ENCODE measurements at regions of chr2 and their contacts with region 1.

Region 1: DNA sequence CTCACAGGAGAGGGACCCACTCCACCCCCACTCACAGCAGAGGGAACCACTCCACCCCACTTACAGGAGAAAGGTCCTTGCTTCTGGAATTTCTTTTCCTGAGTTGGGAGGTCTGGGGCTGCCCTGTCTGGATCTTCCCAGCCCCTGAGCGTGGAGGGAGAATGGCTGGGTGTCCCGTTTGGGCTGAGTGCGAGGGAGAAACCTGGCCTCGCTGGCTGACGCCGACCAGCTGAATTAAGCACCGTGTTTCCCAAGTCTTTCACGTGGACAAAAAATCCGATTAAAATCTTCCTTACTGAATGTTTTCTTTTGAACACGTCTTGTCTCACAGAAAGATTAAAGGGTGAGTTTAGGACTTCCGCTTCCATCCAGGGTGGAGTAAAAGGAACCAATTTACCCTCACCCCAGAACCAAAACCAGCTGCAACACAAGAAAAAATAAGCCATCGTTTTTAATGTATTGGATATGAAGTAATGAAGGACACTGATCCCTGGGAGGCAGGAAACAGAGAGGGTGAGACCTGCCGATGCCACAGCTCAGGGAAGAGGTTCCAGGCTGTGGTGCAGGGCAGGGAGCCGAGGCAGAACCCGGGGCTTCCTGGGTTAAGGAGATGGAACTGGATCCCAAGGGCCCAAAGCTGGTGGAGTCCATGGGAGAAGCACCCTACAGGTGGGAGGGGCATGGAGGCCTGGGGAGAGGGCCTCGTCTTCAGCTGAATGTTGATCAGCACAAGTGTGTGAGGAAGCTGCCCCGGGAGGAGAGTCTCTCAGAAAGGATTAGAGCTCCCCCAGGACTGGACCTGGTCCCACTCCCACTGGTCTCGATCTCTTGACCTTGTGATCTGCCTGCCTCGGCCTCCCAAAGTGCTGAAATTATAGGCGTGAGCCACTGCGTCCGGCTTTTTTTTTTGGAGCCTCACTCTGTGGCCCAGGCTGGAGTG is 60.3 kb downstream of the RTP5 start:
- DNase-seq: no peak
- ATAC-seq: no peak
- H3K4me3 ChIP-seq: no peak overlapping the region
- H3K27ac ChIP-seq: no peak overlapping the region
- H3K4me1 ChIP-seq: no peaks in the 10 kb centered on the region
- H3K27me3 ChIP-seq: no peaks in the 10 kb centered on the region
- CTCF ChIP-seq: no peak

Region 2: DNA sequence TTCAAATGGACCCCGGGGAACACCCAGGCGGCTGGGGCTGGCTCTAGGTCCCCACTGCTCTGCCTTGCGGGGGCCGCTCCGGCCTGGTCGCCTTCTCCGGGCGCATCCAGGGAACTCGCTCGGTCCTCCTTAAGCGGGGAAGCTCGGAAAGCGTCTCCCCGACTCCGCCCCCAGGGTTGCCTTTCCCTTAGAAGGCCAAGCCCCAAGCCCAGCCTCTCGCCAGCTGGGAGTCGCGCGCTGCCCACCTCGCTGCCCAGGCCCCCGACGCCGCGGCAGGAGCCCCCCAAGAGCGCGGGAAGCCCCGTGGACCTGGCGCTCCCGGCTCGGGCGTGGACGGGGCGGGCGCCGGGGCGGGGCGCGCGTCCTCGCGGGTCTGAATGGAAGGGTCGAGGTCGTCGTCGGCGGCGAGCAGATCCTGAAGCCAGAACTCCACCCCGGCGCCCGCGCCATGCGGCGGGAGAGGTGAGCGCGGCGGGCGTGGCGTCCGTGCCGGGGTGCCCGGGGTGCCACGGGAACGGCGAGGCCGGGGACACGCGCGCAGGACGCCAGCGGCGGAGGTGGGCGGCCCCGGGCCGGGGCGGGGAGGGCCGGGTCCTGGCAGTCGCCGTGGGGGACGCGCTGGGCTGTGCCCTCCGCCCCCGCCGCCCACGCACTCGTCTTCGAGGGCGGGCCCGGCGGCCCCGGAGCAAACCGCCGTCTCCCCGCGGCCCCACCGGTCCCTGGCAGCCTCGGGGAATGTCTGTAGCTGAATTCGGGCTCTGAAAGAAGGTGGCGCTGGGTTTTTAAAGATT is 371.1 kb before region 1 on chr2 and contains the start of gene BOK:
- CTCF ChIA-PET with region 1: no interaction called
- POLR2A ChIA-PET with region 1: no interaction called
- intact Hi-C with region 1: no loop called
- DNase-seq: peak; percentile 72
- ATAC-seq: peak; percentile 55
- H3K4me3 ChIP-seq: peak within 1 kb of the TSS; percentile 91
- H3K27ac ChIP-seq: peak within 1 kb of the TSS; percentile 42
- H3K4me1 ChIP-seq: peaks cover 51% of the 10 kb centered on the region
- H3K27me3 ChIP-seq: no peaks in the 10 kb centered on the region
- CTCF ChIP-seq: no peak
- total RNA-seq, gene BOK: 30.2 and 39.3 TPM in 2 replicates

Region 3: DNA sequence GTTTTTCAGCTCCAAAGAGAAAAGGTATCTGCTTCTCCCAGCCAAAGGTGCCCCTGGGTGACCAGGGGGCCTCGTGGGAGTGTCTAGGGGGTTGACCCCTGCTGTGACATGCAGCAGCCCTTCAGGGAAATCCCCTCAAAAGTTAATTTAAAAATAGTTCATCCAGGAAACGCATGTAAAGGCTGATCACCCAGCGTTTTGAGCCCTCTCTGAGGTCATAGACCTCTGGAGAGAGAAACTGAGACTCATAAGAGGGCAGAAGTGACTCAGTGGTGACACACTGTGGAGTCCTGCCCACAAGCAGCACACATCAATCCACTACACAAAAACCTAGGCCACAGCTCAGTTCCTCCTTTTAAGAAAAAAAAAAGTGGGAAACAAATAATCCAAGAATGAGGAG is 141.2 kb before region 1 on chr2:
- CTCF ChIA-PET with region 1: interaction called, 13 read pairs
- POLR2A ChIA-PET with region 1: no interaction called
- intact Hi-C with region 1: no loop called
- DNase-seq: no peak
- ATAC-seq: no peak
- H3K4me3 ChIP-seq: no peak overlapping the region
- H3K27ac ChIP-seq: no peak overlapping the region
- H3K4me1 ChIP-seq: no peaks in the 10 kb centered on the region
- H3K27me3 ChIP-seq: no peaks in the 10 kb centered on the region
- CTCF ChIP-seq: no peak